ENCODE measurements at regions of chr20 and their contacts with region 1.

Region 1: GRCh38 chr20:49508435-49509199 is 26.1 kb upstream of the KCNB1 start:
- DNase-seq: peak in 1 of 3 donors; percentile 6
- ATAC-seq: peak; percentile 20
- H3K4me3 ChIP-seq: no peak overlapping the region
- H3K4me1 ChIP-seq: no peaks in the 10 kb centered on the region
- CTCF ChIP-seq: peak; percentile 14

Region 2: GRCh38 chr20:49338061-49338460 is 170.6 kb before region 1 on chr20:
- intact Hi-C with region 1: loop called in 1 of 2 experiments (anchors 10 kb)
- DNase-seq: no peak
- ATAC-seq: no peak
- H3K4me3 ChIP-seq: no peak overlapping the region
- H3K4me1 ChIP-seq: no peaks in the 10 kb centered on the region
- CTCF ChIP-seq: no peak

Region 3: DNA sequence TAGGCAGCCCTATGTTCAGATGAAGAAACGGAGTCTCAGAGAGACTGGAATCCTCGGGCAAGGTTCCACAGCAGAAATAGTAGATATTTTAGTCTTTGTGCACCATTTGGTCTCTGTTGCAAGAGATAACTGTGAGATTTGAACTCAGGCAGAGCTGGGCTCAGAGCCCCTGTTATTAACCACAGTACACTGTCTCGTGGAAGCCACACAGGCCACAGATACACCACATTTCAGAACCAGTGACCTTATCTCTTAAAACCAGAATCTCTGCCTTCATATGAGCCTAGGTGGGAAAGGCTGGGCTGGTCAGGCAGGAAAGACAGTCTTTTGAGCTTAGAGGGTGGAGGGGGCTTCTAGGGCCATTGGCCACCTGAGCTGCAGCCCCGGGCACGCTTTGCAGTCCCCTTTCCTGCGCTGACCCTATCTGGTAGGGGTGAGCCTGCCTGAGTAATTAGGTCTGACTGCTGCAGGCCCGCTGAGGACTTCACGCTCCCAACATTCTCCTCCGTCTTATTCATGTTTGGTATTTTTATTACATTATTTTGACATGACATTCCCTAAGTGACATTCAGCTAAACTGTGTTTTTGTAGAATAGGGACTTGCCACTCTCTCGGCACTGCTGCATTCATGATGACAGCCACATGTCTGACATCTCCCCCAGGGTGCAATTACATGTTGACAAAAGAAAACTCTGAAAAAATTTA is 97.2 kb before region 1 on chr20:
- intact Hi-C with region 1: no loop called
- DNase-seq: no peak
- ATAC-seq: no peak
- H3K4me3 ChIP-seq: no peak overlapping the region
- H3K4me1 ChIP-seq: no peaks in the 10 kb centered on the region
- CTCF ChIP-seq: no peak

Measured in mucosa of descending colon (tissue), 3 donors.